ENCODE measurements at regions of chr2 and their contacts with region 1.

Region 1: DNA sequence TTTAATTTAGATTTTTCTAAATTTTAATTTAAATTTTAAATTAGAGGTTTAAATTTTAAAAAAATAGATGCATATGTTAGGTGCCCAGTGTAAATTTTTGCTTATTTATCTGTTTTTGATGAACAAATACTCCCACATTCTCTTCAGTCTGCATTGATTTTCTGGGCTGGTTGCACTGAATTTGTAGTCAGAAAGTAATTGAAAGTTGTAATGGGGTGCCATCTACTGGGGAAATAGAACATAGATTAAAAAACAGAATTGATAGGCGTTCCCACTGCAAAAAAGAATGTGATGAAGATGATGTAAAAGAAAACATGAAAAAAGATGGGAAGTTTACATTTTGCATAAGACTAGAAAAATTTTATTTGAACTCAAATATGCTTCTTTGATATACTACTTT is 51.7 kb upstream of the CCDC85A start:
- DNase-seq: no peak
- ATAC-seq: no peak
- H3K4me3 ChIP-seq: no peak overlapping the region
- H3K27ac ChIP-seq: no peak overlapping the region
- H3K4me1 ChIP-seq: no peaks in the 10 kb centered on the region
- H3K27me3 ChIP-seq: no peaks in the 10 kb centered on the region
- CTCF ChIP-seq: peak; percentile 15 to 64 (median 46)
- POLR2A ChIP-seq: no peak

Region 2: GRCh38 chr2:57516698-57517340 is 1384.7 kb after region 1 on chr2:
- intact Hi-C with region 1: loop called in 3 of 10 experiments (anchors 2 to 5 kb)
- DNase-seq: no peak
- ATAC-seq: peak in 1 of 4 donors; percentile 44
- H3K4me3 ChIP-seq: no peak overlapping the region
- H3K27ac ChIP-seq: no peak overlapping the region
- H3K4me1 ChIP-seq: no peaks in the 10 kb centered on the region
- H3K27me3 ChIP-seq: no peaks in the 10 kb centered on the region
- CTCF ChIP-seq: peak; percentile 55 to 75 (median 64)
- POLR2A ChIP-seq: no peak